GM12878 (cell line): ENCODE measurements at regions of chr6 and their contacts with region 1.

Region 1: DNA sequence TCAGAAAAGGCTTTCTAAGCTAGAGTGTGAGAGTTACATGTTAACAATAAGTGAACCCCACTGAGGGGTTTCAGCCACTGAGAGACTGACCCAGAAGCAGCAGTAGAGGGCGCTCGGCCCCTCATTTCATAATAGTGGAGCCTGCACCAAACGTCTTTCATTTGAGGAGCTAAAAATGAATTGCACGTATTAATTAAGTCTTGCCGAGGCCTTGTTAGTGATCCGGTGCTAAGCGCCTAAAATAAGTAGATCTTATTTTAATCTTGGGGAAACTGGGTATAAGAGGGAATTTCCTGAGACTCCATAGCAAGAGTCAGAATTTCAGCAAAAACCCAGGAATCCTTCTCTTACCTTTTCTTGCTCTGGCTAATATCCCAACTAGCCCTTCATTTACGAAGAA is 209.7 kb downstream of the FARS2 start:
- DNase-seq: peak; percentile 26
- ATAC-seq: peak; percentile 99
- H3K4me3 ChIP-seq: 0 out of 2 replicates have a peak overlapping the region, but pooled peaks have one; percentile 3
- H3K27ac ChIP-seq: no peak overlapping the region
- H3K4me1 ChIP-seq: 0 out of 2 replicates have a peak, but pooled peaks cover 3% of the 10 kb centered on the region
- H3K27me3 ChIP-seq: no peaks in the 10 kb centered on the region
- CTCF ChIP-seq: peak; percentile 84 to 88 (median 87)
- EP300 ChIP-seq: no peak
- POLR2A ChIP-seq: no peak
- RAD21 ChIP-seq: peak; percentile 95

Region 2: GRCh38 chr6:5486214-5486613 is 15.2 kb after region 1 on chr6:
- CTCF ChIA-PET with region 1: interaction called, 40 read pairs
- POLR2A ChIA-PET with region 1: no interaction called
- RAD21 ChIA-PET with region 1: interaction called, 11 read pairs
- SMC1A ChIA-PET with region 1: interaction called, 10 read pairs
- in situ Hi-C with region 1: no loop called
- intact Hi-C with region 1: no loop called
- DNase-seq: peak; percentile 64
- ATAC-seq: peak; percentile 94
- H3K4me3 ChIP-seq: 0 out of 2 replicates have a peak overlapping the region, but pooled peaks have one; percentile 42
- H3K27ac ChIP-seq: peak overlapping the region; percentile 49
- H3K4me1 ChIP-seq: peaks cover 20% of the 10 kb centered on the region
- H3K27me3 ChIP-seq: no peaks in the 10 kb centered on the region
- CTCF ChIP-seq: no peak
- EP300 ChIP-seq: peak in 1 of 2 experiments; percentile 62; a peak in 1 of 4 replicates
- POLR2A ChIP-seq: no peak
- RAD21 ChIP-seq: 0 out of 2 replicates have a peak, but pooled peaks have one; percentile 10

Region 3: DNA sequence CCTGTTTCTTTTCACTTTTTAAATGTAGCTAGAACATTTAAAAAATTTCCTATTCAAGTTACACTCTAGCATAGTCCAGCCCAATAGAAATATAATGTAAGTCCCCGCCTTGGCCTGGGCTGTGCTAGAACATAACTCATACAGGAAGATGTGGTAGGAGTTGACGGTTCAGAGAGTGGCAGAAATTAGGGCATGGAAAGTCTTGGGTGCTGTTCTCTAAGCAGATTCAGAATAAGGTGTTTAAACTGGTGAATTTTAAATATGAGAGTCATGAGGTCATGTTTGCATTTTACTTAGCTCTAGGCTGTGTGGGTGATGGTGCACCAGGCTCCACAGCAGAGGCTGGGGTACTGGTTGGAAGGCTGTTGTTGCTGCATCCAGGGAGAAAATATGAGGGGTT is 46.8 kb after region 1 on chr6:
- CTCF ChIA-PET with region 1: interaction called, 15 read pairs
- POLR2A ChIA-PET with region 1: no interaction called
- RAD21 ChIA-PET with region 1: interaction called, 7 read pairs
- SMC1A ChIA-PET with region 1: interaction called, 19 read pairs
- in situ Hi-C with region 1: no loop called
- intact Hi-C with region 1: no loop called
- DNase-seq: no peak
- ATAC-seq: peak; percentile 72
- H3K4me3 ChIP-seq: no peak overlapping the region
- H3K27ac ChIP-seq: peak overlapping the region; percentile 9; the same call in 1 of the 2 replicates
- H3K4me1 ChIP-seq: peaks cover 37% of the 10 kb centered on the region
- H3K27me3 ChIP-seq: no peaks in the 10 kb centered on the region
- CTCF ChIP-seq: no peak
- EP300 ChIP-seq: no peak
- POLR2A ChIP-seq: no peak
- RAD21 ChIP-seq: peak; percentile 6; the same call in 1 of the 2 replicates

Region 4: GRCh38 chr6:5723841-5724691 is 253.0 kb after region 1 on chr6:
- CTCF ChIA-PET with region 1: interaction called, 10 read pairs
- POLR2A ChIA-PET with region 1: no interaction called
- RAD21 ChIA-PET with region 1: interaction called, 6 read pairs
- SMC1A ChIA-PET with region 1: interaction called, 3 read pairs
- in situ Hi-C with region 1: no loop called
- intact Hi-C with region 1: no loop called
- DNase-seq: peak; percentile 60
- ATAC-seq: peak; percentile 98
- H3K4me3 ChIP-seq: peak overlapping the region; percentile 71
- H3K27ac ChIP-seq: peak overlapping the region; percentile 84
- H3K4me1 ChIP-seq: peaks cover 18% of the 10 kb centered on the region
- H3K27me3 ChIP-seq: no peaks in the 10 kb centered on the region
- CTCF ChIP-seq: no peak
- EP300 ChIP-seq: peak; percentile 54 to 95
- POLR2A ChIP-seq: peak; percentile 68
- RAD21 ChIP-seq: no peak

Region 5: GRCh38 chr6:6007366-6008088 is 536.5 kb after region 1 on chr6:
- CTCF ChIA-PET with region 1: interaction called, 5 read pairs
- POLR2A ChIA-PET with region 1: no interaction called
- RAD21 ChIA-PET with region 1: interaction called, 7 read pairs
- SMC1A ChIA-PET with region 1: interaction called, 3 read pairs
- in situ Hi-C with region 1: no loop called
- intact Hi-C with region 1: loop called (anchors 2 kb)
- DNase-seq: no peak
- ATAC-seq: peak; percentile 61
- H3K4me3 ChIP-seq: peak overlapping the region; percentile 70
- H3K27ac ChIP-seq: no peak overlapping the region
- H3K4me1 ChIP-seq: peaks cover 9% of the 10 kb centered on the region
- H3K27me3 ChIP-seq: peaks cover 15 to 41% of the 10 kb centered on the region in 2 experiments
- CTCF ChIP-seq: peak; percentile 11 to 57 (median 47); a peak in 4 of 6 replicates
- EP300 ChIP-seq: no peak
- POLR2A ChIP-seq: no peak
- RAD21 ChIP-seq: no peak